Ascending aorta (tissue), 2 donors: ENCODE measurements at regions of chr1 and their contacts with region 1.

Region 1: DNA sequence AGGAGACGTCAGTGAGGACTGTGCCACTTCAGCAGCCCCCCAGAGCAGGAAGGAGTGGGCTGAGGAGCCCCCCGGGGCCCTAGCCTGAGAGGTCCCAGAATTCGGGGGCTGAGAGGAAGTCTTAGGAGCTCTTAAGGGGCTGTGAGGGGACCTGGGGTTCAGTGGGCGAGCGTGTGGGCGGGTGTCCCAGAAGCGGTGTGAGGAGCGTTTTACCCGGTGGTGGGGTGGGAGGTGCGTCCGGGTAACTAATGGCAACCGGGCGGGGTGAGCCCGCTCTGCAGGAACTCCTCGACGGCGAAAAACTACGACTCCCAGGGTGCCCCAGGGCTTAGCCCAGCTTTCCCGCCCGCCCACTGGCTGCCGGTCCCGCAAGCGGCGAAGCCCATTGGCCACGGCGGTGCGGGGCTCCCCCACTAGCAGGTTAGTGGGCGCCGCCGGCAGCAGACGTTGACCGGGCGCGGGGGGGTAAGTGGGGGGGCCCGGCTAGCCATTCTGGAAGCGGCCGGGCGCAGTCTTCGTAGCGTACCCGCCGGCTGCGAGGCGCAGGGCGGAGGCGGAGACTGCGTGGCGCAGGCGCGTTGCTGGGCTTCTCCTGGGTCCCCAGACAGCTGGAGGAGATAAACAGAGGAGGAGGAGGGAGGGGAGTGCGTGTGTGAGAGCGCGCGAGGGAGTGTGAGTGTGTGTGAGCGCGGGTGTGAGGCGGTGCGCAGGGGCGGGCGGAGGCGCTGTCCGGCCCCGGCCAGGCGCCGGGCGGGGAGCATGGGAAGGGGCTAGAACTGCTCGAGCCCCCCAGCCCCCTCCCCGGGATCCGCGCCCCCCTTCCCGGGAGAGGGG is at the start of gene WDTC1:
- DNase-seq: peak; percentile 90 to 99
- H3K4me3 ChIP-seq: peak within 1 kb of the TSS; percentile 92 to 99
- H3K27ac ChIP-seq: peak within 1 kb of the TSS; percentile 75 to 77
- H3K4me1 ChIP-seq: peaks cover 7 to 10% of the 10 kb centered on the region in 2 donors
- H3K27me3 ChIP-seq: no peaks in the 10 kb centered on the region
- CTCF ChIP-seq: no peak
- total RNA-seq, gene WDTC1: 36.2 TPM

Region 2: DNA sequence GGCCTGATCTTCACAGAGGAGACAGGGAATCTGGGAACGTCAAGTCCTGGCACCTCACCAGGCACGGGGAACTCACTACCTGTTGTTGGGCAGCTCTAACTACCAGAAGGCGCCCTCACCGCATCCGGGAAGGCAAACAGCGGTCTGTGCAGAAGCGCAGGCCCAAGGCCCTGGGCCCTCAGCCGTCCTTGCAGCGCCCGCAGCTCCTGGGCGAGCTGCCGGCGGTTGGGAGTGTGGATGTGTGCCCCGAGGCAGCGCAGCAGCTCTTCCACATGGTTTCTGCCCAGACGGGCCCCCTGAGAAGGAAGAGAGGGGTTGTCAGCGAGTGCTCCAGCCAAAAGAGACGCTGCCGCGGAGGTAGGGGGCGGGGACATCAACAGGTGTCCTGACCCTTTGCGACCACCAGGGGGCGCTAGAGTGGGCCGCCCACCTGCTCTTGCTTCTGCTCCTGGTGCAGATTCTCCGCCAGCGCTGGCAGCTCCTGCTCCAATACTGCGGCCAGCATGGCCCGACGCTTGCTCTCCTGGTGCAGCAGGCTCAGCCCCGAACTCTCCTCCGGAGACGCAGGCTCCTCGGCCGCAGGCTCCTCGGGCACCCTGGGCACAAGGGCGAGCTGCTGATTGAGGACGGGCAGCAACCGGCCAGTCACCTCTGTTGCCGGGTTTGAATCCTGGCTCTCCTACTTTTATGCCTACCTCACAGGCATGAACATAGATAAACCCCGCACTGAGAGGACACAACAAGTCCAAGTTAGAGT is 123.2 kb after region 1 on chr1:
- intact Hi-C with region 1: loop called (anchors 10 kb)
- DNase-seq: peak in 1 of 2 donors; percentile 80
- H3K4me3 ChIP-seq: peak overlapping the region in 1 of 2 donors; percentile 26
- H3K27ac ChIP-seq: peak overlapping the region in 1 of 2 donors; percentile 12
- H3K4me1 ChIP-seq: no peaks in the 10 kb centered on the region
- H3K27me3 ChIP-seq: no peaks in the 10 kb centered on the region
- CTCF ChIP-seq: peak; percentile 93 to 96 (median 94)